ENCODE measurements at regions of chr4 and their contacts with region 1.

Region 1: DNA sequence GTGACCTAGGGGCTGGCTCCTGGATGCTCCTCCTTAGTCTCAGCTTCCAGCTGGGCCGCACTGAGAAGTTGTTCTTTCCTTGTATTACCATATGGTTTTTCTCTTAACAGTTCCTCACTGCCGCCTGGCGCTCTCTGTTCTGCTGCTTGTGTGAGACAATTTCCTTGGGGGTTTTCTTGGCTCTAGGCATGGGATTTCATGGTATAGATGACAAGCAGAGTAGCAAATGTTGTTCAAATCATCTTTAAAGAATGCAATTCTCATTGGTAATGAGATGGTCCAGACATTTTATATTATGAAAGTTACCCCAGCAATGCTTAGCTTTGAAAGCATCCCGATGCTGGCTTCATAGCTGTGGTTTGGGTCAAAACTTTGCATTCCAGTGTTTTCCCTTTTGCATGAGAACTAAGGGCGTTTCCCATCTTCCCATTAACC is 37.6 kb downstream of the SEPTIN11 start:
- DNase-seq: no peak
- ATAC-seq: no peak
- H3K4me3 Mint-ChIP-seq: no peak overlapping the region
- H3K27ac Mint-ChIP-seq: no peak overlapping the region
- H3K4me1 Mint-ChIP-seq: peaks cover 84% of the 10 kb centered on the region
- H3K27me3 Mint-ChIP-seq: peaks cover 4% of the 10 kb centered on the region

Region 2: DNA sequence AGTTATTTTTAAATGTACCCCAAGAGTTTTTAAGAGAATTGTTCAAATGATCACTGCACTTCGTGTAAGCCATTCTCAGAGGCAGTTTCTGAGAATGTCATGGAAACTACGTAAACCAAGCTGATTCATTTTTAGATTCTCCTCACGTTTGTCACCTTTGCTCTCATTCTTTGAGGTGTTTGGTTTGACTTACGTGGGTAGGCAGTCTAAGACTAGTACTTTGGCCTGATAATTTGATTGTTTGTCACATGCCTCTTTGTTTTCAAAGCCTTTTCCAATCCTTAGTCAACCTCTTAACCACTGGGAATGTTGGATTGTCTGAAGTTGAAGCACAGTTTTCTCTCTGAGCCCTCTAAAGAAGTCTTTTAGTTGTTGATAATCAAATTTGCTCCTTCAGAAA is 27.2 kb before region 1 on chr4:
- CTCF ChIA-PET with region 1: interaction called, 15 read pairs
- POLR2A ChIA-PET with region 1: no interaction called
- DNase-seq: no peak
- ATAC-seq: peak; percentile 62
- H3K4me3 Mint-ChIP-seq: no peak overlapping the region
- H3K27ac Mint-ChIP-seq: no peak overlapping the region
- H3K4me1 Mint-ChIP-seq: peaks cover 25% of the 10 kb centered on the region
- H3K27me3 Mint-ChIP-seq: no peaks in the 10 kb centered on the region

Region 3: DNA sequence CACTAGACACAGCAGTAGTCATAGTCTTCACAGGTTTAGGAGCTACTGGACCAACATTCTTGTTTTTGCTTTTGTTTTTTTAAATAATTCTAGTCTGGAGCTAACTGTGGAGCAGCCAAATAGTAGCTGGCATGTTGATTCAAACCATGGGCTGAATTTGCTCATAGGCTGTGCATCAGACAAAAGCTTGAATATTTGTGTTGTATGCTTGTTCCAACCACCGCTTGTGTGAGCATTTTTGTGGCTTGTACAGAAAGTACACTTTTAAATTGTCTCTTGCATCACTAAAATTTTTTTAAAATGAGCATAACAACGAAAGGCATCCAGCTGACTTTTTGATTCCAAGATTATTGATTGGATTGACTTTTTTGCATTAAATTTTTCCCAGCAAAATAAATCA is 49.0 kb after region 1 on chr4:
- CTCF ChIA-PET with region 1: interaction called, 11 read pairs
- POLR2A ChIA-PET with region 1: interaction called, 3 read pairs
- DNase-seq: no peak
- ATAC-seq: no peak
- H3K4me3 Mint-ChIP-seq: no peak overlapping the region
- H3K27ac Mint-ChIP-seq: no peak overlapping the region
- H3K4me1 Mint-ChIP-seq: peaks cover 14% of the 10 kb centered on the region
- H3K27me3 Mint-ChIP-seq: no peaks in the 10 kb centered on the region

Region 4: GRCh38 chr4:77044461-77045150 is 57.4 kb after region 1 on chr4:
- CTCF ChIA-PET with region 1: interaction called, 23 read pairs
- POLR2A ChIA-PET with region 1: interaction called, 3 read pairs
- DNase-seq: no peak
- ATAC-seq: peak; percentile 73
- H3K4me3 Mint-ChIP-seq: no peak overlapping the region
- H3K27ac Mint-ChIP-seq: no peak overlapping the region
- H3K4me1 Mint-ChIP-seq: peaks cover 9% of the 10 kb centered on the region
- H3K27me3 Mint-ChIP-seq: no peaks in the 10 kb centered on the region

Measured in activated CD8-positive, alpha-beta T cell treated with anti-CD3 and anti-CD28 coated beads, Interleukin-2, amount 10 ng/mL, durations not matched to agents 7 days and 5 days (primary cell).